ENCODE measurements at regions of chr6 and their contacts with region 1.

Region 1: GRCh38 chr6:14129575-14129974 is 12.0 kb downstream of the CD83 start:
- DNase-seq: peak; percentile 80
- H3K4me3 ChIP-seq: no peak overlapping the region
- H3K27ac ChIP-seq: peak overlapping the region in 2 of 8 donors; percentile 8 to 22
- H3K4me1 ChIP-seq: peaks cover 4 to 67% (median 26%) of the 10 kb centered on the region in 6 donors
- H3K27me3 ChIP-seq: no peaks in the 10 kb centered on the region
- CTCF ChIP-seq: peak; percentile 14 to 67 (median 60)
- POLR2A ChIP-seq: no peak

Region 2: GRCh38 chr6:13892007-13892645 is 237.4 kb before region 1 on chr6:
- intact Hi-C with region 1: no loop called
- DNase-seq: no peak
- H3K4me3 ChIP-seq: no peak overlapping the region
- H3K27ac ChIP-seq: no peak overlapping the region
- H3K4me1 ChIP-seq: no peaks in the 10 kb centered on the region
- H3K27me3 ChIP-seq: peaks cover 0 to 3% (median 0%) of the 10 kb centered on the region in 7 donors
- CTCF ChIP-seq: no peak
- POLR2A ChIP-seq: no peak

Region 3: DNA sequence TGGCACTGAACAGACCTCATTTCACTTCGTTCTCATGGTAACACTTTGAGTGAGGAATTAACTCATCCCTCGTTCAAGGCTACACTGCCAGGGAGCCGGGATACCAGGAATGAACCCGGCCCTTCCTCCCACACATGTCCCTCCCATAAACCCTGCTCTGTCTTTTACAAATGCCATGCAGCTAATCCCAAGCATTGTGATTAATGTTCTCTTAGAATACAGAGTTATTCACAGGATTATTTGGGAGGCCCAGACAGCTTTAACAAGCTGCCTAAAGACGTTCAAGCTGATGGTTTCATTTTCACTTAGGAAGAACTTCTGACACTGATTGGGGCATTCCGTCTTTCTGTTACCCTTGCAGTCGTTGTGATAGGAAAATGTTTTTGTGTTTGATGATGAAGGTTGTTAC is 54.5 kb before region 1 on chr6:
- intact Hi-C with region 1: no loop called
- DNase-seq: no peak
- H3K4me3 ChIP-seq: peak overlapping the region; percentile 10 to 62 (median 20)
- H3K27ac ChIP-seq: peak overlapping the region; percentile 75 to 87 (median 80)
- H3K4me1 ChIP-seq: peaks cover 6 to 31% (median 15%) of the 10 kb centered on the region in 6 donors
- H3K27me3 ChIP-seq: no peaks in the 10 kb centered on the region
- CTCF ChIP-seq: no peak
- POLR2A ChIP-seq: no peak

Region 4: GRCh38 chr6:15621203-15622044 is 1491.8 kb after region 1 on chr6:
- intact Hi-C with region 1: loop called (anchors 10 kb)
- DNase-seq: peak; percentile 88
- H3K4me3 ChIP-seq: no peak overlapping the region
- H3K27ac ChIP-seq: peak overlapping the region in 7 of 8 donors; percentile 5 to 74 (median 48)
- H3K4me1 ChIP-seq: peaks cover 10 to 77% (median 35%) of the 10 kb centered on the region in 6 donors
- H3K27me3 ChIP-seq: no peaks in the 10 kb centered on the region
- CTCF ChIP-seq: no peak
- POLR2A ChIP-seq: no peak